Heart right ventricle (tissue), 16 donors: ENCODE measurements at regions of chr2 and their contacts with region 1.

Region 1: DNA sequence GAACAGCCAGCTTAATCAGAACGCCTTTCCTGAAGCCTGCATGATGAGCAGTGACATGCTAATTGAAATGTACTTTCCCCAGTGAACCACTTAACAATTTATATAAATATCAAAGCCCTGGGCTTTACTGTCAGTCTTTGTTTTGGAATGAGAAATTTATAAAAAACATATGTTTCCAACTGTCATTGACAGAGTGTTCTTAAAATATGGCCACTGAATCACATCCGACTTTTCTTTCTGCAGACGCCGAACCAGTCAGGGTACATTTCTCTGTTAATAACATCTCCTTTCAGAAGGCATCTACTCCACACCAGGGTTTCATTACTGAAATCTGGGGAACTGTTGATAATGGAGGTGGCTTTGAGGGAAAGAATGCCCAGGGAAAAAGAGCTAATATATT is 343.7 kb downstream of the INSIG2 start:
- DNase-seq: no peak
- ATAC-seq: no peak
- H3K4me3 ChIP-seq: no peak overlapping the region
- H3K27ac ChIP-seq: no peak overlapping the region
- H3K4me1 ChIP-seq: no peaks in the 10 kb centered on the region
- H3K27me3 ChIP-seq: peaks cover 0 to 5% (median 0%) of the 10 kb centered on the region in 7 donors
- CTCF ChIP-seq: no peak

Region 2: GRCh38 chr2:118459424-118459823 is 27.4 kb after region 1 on chr2:
- intact Hi-C with region 1: loop called in 1 of 10 experiments (anchors 2 kb)
- DNase-seq: no peak
- ATAC-seq: no peak
- H3K4me3 ChIP-seq: no peak overlapping the region
- H3K27ac ChIP-seq: no peak overlapping the region
- H3K4me1 ChIP-seq: no peaks in the 10 kb centered on the region
- H3K27me3 ChIP-seq: peaks cover 0 to 34% (median 16%) of the 10 kb centered on the region in 7 donors
- CTCF ChIP-seq: no peak